Naive thymus-derived CD4-positive, alpha-beta T cell (primary cell): ENCODE measurements at regions of chr2 and their contacts with region 1.

Region 1: GRCh38 chr2:14903709-14904374 is 271.3 kb downstream of the LRATD1 start:
- DNase-seq: peak in 4 of 9 donors; percentile 2 to 64 (median 7)
- ATAC-seq: peak; percentile 72
- H3K4me3 ChIP-seq: no peak overlapping the region
- H3K4me3 Mint-ChIP-seq: no peak overlapping the region
- H3K27ac ChIP-seq: no peak overlapping the region
- H3K27ac Mint-ChIP-seq: no peak overlapping the region
- H3K4me1 ChIP-seq: no peaks in the 10 kb centered on the region
- H3K4me1 Mint-ChIP-seq: no peaks in the 10 kb centered on the region
- H3K27me3 ChIP-seq: no peaks in the 10 kb centered on the region
- H3K27me3 Mint-ChIP-seq: peaks cover 0 to 13% (median 11%) of the 10 kb centered on the region in 5 donors

Region 2: GRCh38 chr2:15159751-15160177 is 255.9 kb after region 1 on chr2:
- CTCF ChIA-PET with region 1: no interaction called
- POLR2A ChIA-PET with region 1: no interaction called
- intact Hi-C with region 1: loop called in 1 of 2 experiments (anchors 1 kb)
- DNase-seq: peak in 2 of 9 donors; percentile 11 to 28
- ATAC-seq: no peak
- H3K4me3 ChIP-seq: no peak overlapping the region
- H3K4me3 Mint-ChIP-seq: no peak overlapping the region
- H3K27ac ChIP-seq: no peak overlapping the region
- H3K27ac Mint-ChIP-seq: no peak overlapping the region
- H3K4me1 ChIP-seq: peaks cover 0 to 8% of the 10 kb centered on the region in 2 donors
- H3K4me1 Mint-ChIP-seq: peaks cover 5 to 14% (median 12%) of the 10 kb centered on the region in 7 donors
- H3K27me3 ChIP-seq: no peaks in the 10 kb centered on the region
- H3K27me3 Mint-ChIP-seq: peaks cover 0 to 15% (median 0%) of the 10 kb centered on the region in 5 donors

Region 3: GRCh38 chr2:15354586-15355366 is 450.9 kb after region 1 on chr2:
- CTCF ChIA-PET with region 1: no interaction called
- POLR2A ChIA-PET with region 1: no interaction called
- intact Hi-C with region 1: no loop called
- DNase-seq: no peak
- ATAC-seq: no peak
- H3K4me3 ChIP-seq: no peak overlapping the region
- H3K4me3 Mint-ChIP-seq: no peak overlapping the region
- H3K27ac ChIP-seq: no peak overlapping the region
- H3K27ac Mint-ChIP-seq: no peak overlapping the region
- H3K4me1 ChIP-seq: no peaks in the 10 kb centered on the region
- H3K4me1 Mint-ChIP-seq: no peaks in the 10 kb centered on the region
- H3K27me3 ChIP-seq: no peaks in the 10 kb centered on the region
- H3K27me3 Mint-ChIP-seq: no peaks in the 10 kb centered on the region